Activated B cell treated with CpG ODN at 0.5 μM for 24 hours (primary cell): ENCODE measurements at regions of chr1 and their contacts with region 1.

Region 1: DNA sequence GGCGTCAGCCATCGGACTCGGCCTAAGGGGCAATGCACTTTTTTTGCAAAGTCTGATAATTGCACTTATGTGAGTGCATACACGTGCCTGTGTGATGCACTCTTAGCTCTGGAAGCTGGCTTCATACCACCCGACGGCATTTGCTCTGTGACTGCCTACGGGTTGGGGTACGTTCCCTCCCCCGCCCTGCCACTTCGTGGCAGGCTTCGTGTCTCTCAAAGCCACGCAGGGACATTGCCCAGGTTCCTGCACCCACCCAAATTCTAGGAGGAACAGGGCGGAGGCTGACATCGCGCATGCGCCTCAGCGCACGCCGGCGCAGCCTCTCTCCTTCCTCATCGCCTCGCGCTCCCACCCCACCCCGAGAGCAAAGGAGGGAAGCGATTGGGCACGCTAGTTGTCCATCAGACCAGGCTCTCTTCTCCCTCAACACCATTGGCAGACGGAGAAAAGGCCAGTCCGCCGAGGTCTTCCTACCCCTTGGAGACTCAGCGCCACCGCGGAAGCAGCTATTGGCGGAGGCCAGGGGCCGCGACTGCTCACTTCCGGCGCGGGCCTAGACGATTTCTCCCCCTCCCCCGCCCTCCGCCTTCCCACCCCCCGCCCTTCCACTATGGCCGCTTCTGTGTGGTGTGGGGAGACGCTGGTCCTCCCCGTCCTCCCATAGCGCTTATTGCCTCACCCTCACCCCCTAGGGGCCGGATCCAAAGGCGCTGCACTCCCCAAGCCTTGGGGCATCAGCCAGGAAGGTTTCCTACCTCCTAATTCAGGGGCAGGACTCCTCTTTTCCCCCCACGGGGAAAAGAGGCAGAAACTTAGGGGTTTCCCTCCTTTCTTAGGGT is at the start of gene INTS3:
- DNase-seq: peak; percentile 90
- ATAC-seq: peak; percentile 96
- H3K4me3 Mint-ChIP-seq: peak within 1 kb of the TSS; percentile 97
- H3K27ac Mint-ChIP-seq: peak within 1 kb of the TSS; percentile 96
- H3K4me1 Mint-ChIP-seq: peaks cover 39% of the 10 kb centered on the region
- H3K27me3 Mint-ChIP-seq: no peaks in the 10 kb centered on the region
- CTCF ChIP-seq: no peak
- total RNA-seq, gene INTS3: 81.1 and 88.6 TPM in 2 replicates

Region 2: DNA sequence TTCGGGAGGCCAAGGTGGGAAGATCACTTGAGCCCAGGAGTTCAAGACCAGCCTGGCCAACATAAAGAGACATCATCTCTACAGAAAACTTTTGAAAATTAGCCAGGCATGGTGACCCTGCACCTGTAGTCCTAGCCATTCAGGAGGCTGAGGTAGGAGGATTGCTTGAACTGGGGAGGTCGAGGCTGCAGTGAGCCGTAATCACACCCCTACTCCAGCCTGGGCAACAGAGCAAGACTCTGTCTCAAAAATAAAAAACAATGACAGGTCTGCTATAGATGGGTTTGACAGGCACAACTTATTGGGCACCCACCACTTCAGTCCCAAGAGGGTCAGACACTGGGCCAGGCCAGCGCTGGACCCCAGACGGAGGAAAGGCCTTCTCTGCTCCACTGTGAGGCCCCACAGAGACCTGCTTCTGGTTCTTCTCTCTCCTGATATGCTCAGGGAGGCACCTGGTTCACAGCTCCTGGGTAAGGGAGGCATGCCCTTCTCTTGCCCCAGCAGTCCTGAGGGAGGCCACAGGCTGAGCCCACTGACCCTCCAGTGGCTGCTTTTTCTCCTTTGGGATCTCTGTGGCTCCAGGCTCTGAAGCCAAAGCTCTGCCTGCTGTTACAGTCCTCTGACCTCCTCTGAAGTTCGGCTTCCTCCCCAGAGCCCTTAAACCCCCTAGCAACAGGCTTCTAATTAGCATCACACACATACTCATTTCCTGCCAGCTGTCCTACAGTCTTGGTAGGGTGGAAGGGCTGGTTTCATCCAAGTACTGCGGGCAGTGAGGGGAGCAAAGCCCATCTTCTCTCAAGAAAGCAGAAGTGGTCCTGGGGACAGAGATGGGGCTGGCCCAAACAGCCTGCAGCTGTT is 129.1 kb before region 1 on chr1:
- CTCF ChIA-PET with region 1: no interaction called
- POLR2A ChIA-PET with region 1: interaction called, 11 read pairs
- intact Hi-C with region 1: no loop called
- DNase-seq: peak; percentile 57
- ATAC-seq: peak; percentile 92
- H3K4me3 Mint-ChIP-seq: peak overlapping the region; percentile 73
- H3K27ac Mint-ChIP-seq: peak overlapping the region; percentile 96
- H3K4me1 Mint-ChIP-seq: peaks cover 48% of the 10 kb centered on the region
- H3K27me3 Mint-ChIP-seq: no peaks in the 10 kb centered on the region
- CTCF ChIP-seq: no peak

Region 3: GRCh38 chr1:153677718-153678505 is 49.8 kb before region 1 on chr1:
- CTCF ChIA-PET with region 1: no interaction called
- POLR2A ChIA-PET with region 1: interaction called, 13 read pairs
- intact Hi-C with region 1: no loop called
- DNase-seq: peak; percentile 40
- ATAC-seq: peak; percentile 67
- H3K4me3 Mint-ChIP-seq: peak overlapping the region; percentile 86
- H3K27ac Mint-ChIP-seq: no peak overlapping the region
- H3K4me1 Mint-ChIP-seq: peaks cover 21% of the 10 kb centered on the region
- H3K27me3 Mint-ChIP-seq: peaks cover 31% of the 10 kb centered on the region
- CTCF ChIP-seq: peak; percentile 73

Region 4: GRCh38 chr1:153742411-153743142 is 14.9 kb after region 1 on chr1:
- CTCF ChIA-PET with region 1: no interaction called
- POLR2A ChIA-PET with region 1: interaction called, 22 read pairs
- intact Hi-C with region 1: loop called (anchors 1 kb)
- DNase-seq: peak; percentile 17
- ATAC-seq: peak; percentile 79
- H3K4me3 Mint-ChIP-seq: peak overlapping the region; percentile 55
- H3K27ac Mint-ChIP-seq: peak overlapping the region; percentile 80
- H3K4me1 Mint-ChIP-seq: peaks cover 35% of the 10 kb centered on the region
- H3K27me3 Mint-ChIP-seq: no peaks in the 10 kb centered on the region
- CTCF ChIP-seq: no peak

Region 5: DNA sequence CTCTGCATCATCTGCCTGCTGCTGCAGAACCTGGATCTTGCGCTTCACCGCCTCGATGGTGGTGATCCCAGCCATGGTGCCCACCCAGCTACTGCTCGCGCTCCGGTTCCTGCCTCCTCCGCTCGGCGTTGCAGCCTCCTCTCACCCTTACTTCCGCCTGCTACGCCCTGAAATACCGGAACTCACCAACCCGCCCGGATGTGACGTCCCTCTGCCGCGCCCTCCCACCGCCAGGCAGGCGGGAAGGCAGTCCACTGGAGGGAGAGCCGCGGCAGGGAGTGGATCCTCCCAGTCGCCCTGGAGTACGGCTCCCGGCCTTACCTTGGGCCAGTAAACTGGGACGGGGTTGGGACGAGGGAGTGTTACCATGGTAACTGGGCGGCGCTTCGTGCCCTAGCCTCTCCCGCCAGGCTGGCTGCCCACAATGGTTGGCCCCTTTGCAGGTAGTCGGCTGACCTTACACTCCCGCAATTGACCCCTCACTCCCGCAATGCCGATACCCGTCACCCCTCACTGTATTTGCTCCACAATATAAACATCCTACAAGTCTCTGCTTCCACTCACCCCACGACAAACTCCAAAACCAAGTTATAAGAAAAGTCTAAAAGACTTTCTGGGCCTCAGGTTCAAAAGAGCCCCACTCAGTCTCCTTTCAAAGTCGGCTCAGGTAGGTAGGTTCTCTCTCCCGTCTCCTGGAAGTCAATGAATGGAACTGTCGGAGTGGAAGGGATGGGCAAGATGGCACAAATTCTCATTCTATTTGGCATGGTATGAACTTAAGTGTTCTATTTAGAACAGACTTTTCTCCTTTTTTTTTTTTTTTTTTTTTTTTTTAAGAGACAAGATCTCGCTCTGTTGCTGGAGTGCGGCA is 455.6 kb after region 1 on chr1:
- CTCF ChIA-PET with region 1: no interaction called
- POLR2A ChIA-PET with region 1: interaction called, 4 read pairs
- intact Hi-C with region 1: loop called (anchors 5 kb)
- DNase-seq: peak; percentile 93
- ATAC-seq: peak; percentile 76
- H3K4me3 Mint-ChIP-seq: peak overlapping the region; percentile 100
- H3K27ac Mint-ChIP-seq: peak overlapping the region; percentile 100
- H3K4me1 Mint-ChIP-seq: peaks cover 48% of the 10 kb centered on the region
- H3K27me3 Mint-ChIP-seq: peaks cover 2% of the 10 kb centered on the region
- CTCF ChIP-seq: no peak